ENCODE measurements at regions of chr3 and their contacts with region 1.

Region 1: GRCh38 chr3:23629181-23629893 is 176.4 kb upstream of the UBE2E1 start:
- DNase-seq: peak; percentile 88
- H3K4me3 ChIP-seq: no peak overlapping the region
- H3K27ac ChIP-seq: no peak overlapping the region
- H3K4me1 ChIP-seq: peaks cover 12% of the 10 kb centered on the region
- H3K27me3 ChIP-seq: no peaks in the 10 kb centered on the region
- CTCF ChIP-seq: no peak
- POLR2A ChIP-seq: no peak

Region 2: DNA sequence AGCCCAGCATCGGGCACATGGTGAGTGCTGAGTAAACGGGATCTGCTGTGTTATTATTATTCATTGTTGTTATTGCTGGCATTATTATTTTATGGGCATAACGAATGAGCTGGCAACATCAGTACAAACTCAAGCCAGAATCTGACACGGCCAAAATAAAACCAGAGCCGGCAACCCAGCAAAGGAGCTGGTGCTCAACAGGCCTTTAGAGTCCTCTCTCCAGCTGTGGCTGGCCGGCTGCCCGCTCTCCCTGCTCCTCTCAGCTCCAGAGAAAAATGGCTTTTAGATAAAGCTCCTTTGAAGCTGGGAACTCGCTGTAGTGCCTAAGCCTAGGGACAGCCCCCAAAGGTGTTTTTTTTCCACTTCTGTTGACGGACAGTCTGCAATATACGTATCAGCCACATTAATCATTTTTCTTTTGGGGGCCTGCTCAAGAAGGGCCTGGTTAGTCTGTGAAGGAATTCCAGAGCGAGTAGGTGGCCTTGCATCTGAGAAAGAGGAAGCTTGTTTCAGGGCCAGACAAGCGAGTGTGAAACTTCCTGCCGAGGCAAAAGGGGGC is 17.5 kb before region 1 on chr3:
- CTCF ChIA-PET with region 1: interaction called, 6 read pairs
- POLR2A ChIA-PET with region 1: no interaction called
- dilution Hi-C with region 1: no loop called
- intact Hi-C with region 1: loop called (anchors 1 kb)
- DNase-seq: peak; percentile 63
- H3K4me3 ChIP-seq: no peak overlapping the region
- H3K27ac ChIP-seq: peak overlapping the region; percentile 28
- H3K4me1 ChIP-seq: peaks cover 18% of the 10 kb centered on the region
- H3K27me3 ChIP-seq: no peaks in the 10 kb centered on the region
- CTCF ChIP-seq: no peak
- POLR2A ChIP-seq: no peak

Region 3: DNA sequence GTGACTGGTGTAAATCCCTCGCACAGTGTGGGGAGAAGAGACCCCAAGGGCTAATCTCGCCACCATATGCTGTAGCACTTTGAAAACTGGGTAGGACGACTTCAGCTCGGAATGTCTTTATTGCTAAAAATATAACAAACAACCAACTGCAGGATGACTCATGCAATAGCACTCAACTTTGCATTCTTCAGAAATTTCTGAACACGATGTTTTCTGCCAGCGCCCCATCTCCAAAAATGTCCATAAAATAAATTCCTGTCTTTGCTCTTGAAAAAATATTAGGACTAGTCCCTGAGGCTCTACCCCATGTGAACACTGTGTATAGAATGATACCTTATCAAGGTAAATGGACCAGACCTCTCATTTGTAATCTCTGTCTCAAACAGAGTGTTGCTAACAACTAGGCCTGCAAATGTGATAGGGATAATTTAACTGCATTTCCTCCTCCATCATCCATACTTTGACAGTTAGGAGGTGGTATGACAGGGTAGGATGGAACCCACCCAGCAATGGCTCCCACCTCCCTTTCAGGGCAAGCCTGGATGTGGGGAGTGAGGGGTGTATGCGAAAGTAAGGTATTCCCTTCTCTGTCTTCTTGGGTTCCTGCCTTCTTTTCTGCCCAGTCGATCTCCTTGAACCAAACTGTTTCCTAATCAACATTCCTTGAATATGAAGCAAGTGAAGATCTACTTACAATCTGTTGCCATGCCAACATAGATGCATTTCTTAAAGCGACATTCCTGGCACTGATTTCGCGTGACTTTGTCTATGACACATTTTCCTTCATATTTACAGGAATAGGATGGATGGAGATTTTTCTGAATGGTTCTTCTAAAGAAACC is 516.9 kb after region 1 on chr3:
- CTCF ChIA-PET with region 1: no interaction called
- POLR2A ChIA-PET with region 1: no interaction called
- dilution Hi-C with region 1: no loop called
- intact Hi-C with region 1: no loop called
- DNase-seq: no peak
- H3K4me3 ChIP-seq: no peak overlapping the region
- H3K27ac ChIP-seq: no peak overlapping the region
- H3K4me1 ChIP-seq: no peaks in the 10 kb centered on the region
- H3K27me3 ChIP-seq: no peaks in the 10 kb centered on the region
- CTCF ChIP-seq: no peak
- POLR2A ChIP-seq: no peak

Measured in endothelial cell of umbilical vein (primary cell).